ENCODE measurements at regions of chr7 and their contacts with region 1.

Region 1: DNA sequence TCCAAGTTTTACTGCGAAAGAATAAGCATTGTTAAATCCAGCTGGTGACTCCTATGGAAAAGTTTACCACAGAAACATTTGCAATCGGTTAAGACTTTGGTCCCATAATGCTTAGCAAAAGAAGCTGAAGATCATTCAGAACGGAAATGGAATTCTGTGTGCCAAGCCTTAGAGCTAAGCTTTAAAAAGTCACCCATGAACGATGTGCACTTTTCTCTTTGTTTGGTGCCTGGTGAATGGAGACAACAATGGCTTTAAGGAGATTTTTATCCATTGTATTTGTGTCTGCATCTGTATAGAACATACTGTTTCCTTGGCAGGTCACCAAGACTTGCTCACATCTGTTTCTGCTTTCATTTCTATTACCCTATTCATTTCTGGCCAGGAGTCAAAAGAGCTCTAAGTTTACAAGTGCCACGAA is 26.3 kb upstream of the COL1A2 start:
- DNase-seq: peak; percentile 74
- H3K4me3 ChIP-seq: peak overlapping the region; percentile 29
- H3K27me3 ChIP-seq: no peaks in the 10 kb centered on the region
- CTCF ChIP-seq: no peak

Region 2: GRCh38 chr7:94301024-94301586 is 67.3 kb before region 1 on chr7:
- CTCF ChIA-PET with region 1: interaction called, 45 read pairs
- POLR2A ChIA-PET with region 1: interaction called, 57 read pairs
- DNase-seq: peak; percentile 90
- H3K4me3 ChIP-seq: peak overlapping the region; percentile 5; the same call in 1 of the 2 replicates
- H3K27me3 ChIP-seq: no peaks in the 10 kb centered on the region
- CTCF ChIP-seq: peak; percentile 26; the same call in 1 of the 2 replicates

Region 3: GRCh38 chr7:94348142-94348541 is 20.2 kb before region 1 on chr7:
- CTCF ChIA-PET with region 1: interaction called, 4 read pairs
- POLR2A ChIA-PET with region 1: interaction called, 11 read pairs
- DNase-seq: peak; percentile 99
- H3K4me3 ChIP-seq: no peak overlapping the region
- H3K27me3 ChIP-seq: no peaks in the 10 kb centered on the region; the same call in 1 of the 2 replicates
- CTCF ChIP-seq: no peak

Region 4: DNA sequence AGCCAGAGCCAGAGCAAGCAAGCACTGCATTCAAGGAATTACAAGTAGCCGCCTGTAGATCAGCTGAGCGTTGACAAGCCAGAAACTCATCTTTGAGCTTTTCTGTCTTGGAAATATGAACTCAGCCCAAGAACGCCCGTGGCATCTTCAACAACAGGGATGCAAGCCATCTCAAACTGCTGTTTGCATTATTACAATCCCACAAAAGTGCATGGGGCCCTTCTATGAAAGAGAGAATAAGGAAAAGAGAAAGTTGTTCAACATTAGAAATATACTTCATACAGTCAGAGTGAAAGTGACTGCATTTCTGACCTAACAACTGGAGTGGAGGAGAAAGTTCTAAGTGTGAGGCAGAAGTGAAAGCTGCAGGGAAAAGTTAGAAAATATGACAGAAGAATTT is 281.1 kb after region 1 on chr7:
- CTCF ChIA-PET with region 1: no interaction called
- POLR2A ChIA-PET with region 1: no interaction called
- DNase-seq: no peak
- H3K4me3 ChIP-seq: no peak overlapping the region
- H3K27me3 ChIP-seq: no peaks in the 10 kb centered on the region
- CTCF ChIP-seq: no peak

Measured in BJ (cell line).